ENCODE measurements at regions of chr13 and their contacts with region 1.

Region 1: DNA sequence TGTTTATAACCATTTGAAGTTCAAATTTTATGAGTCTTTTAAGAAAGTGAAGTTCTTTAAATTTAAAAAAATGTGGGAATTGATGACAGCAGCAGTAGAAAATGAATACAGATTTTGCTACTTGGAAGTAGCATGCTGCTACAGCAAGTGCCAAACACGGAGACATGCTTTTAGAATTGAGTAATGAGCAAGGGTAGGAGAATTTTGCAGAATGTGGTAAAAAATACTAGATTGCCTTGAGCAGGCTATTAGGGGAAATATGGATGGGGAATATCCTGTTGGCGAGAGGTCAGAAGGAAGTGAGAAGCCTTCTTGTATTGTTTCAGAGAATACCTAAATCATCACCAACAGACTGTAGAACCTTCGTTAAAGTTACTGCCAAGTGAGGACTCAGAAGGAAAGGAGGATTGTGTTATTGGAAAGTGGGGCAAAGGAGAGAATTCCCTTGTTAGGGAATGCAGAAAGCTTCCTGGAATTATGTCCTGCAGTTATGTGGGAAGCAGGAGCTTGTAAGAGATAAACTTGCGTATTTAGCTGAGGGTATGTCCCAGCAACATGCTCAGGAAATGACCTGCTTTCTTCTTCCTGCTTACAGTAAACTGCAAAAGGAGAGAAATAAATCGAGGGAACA is 32.4 kb upstream of the OXGR1 start:
- DNase-seq: no peak
- H3K4me3 ChIP-seq: no peak overlapping the region
- H3K27ac ChIP-seq: no peak overlapping the region
- H3K4me1 ChIP-seq: no peaks in the 10 kb centered on the region
- H3K27me3 ChIP-seq: no peaks in the 10 kb centered on the region
- CTCF ChIP-seq: no peak
- POLR2A ChIP-seq: no peak

Region 2: GRCh38 chr13:97141564-97142005 is 114.9 kb after region 1 on chr13:
- intact Hi-C with region 1: no loop called
- DNase-seq: peak; percentile 45
- H3K4me3 ChIP-seq: no peak overlapping the region
- H3K27ac ChIP-seq: no peak overlapping the region
- H3K4me1 ChIP-seq: no peaks in the 10 kb centered on the region
- H3K27me3 ChIP-seq: no peaks in the 10 kb centered on the region
- CTCF ChIP-seq: no peak
- POLR2A ChIP-seq: no peak

Region 3: GRCh38 chr13:97359181-97360057 is 332.8 kb after region 1 on chr13:
- intact Hi-C with region 1: loop called (anchors 10 kb)
- DNase-seq: peak; percentile 54
- H3K4me3 ChIP-seq: no peak overlapping the region
- H3K27ac ChIP-seq: no peak overlapping the region
- H3K4me1 ChIP-seq: no peaks in the 10 kb centered on the region
- H3K27me3 ChIP-seq: no peaks in the 10 kb centered on the region
- CTCF ChIP-seq: peak; percentile 32 to 78 (median 72)
- POLR2A ChIP-seq: no peak

Region 4: DNA sequence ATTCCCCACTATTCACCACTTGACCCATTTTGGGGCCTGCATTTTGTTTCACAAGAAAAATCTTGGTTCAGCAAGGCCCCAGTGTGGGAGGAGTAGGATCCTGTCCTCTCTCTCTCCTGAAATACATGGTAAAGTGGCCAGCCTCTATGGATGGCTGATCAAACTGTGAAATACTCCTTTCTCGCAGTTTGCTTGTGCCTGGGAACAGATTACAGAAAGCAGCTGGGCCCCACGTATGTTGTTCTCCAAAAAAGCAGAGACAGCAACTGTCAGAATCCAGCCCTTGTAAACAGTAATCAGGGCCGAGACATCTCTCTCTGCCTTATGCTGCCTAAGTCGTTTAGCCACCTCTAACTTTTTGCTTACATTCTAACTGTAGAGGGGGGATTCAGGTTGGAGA is 346.3 kb after region 1 on chr13:
- intact Hi-C with region 1: no loop called
- DNase-seq: no peak
- H3K4me3 ChIP-seq: no peak overlapping the region
- H3K27ac ChIP-seq: no peak overlapping the region
- H3K4me1 ChIP-seq: no peaks in the 10 kb centered on the region
- H3K27me3 ChIP-seq: no peaks in the 10 kb centered on the region
- CTCF ChIP-seq: no peak
- POLR2A ChIP-seq: no peak